WTC11 (cell line): ENCODE measurements at regions of chr7 and their contacts with region 1.

Region 1: DNA sequence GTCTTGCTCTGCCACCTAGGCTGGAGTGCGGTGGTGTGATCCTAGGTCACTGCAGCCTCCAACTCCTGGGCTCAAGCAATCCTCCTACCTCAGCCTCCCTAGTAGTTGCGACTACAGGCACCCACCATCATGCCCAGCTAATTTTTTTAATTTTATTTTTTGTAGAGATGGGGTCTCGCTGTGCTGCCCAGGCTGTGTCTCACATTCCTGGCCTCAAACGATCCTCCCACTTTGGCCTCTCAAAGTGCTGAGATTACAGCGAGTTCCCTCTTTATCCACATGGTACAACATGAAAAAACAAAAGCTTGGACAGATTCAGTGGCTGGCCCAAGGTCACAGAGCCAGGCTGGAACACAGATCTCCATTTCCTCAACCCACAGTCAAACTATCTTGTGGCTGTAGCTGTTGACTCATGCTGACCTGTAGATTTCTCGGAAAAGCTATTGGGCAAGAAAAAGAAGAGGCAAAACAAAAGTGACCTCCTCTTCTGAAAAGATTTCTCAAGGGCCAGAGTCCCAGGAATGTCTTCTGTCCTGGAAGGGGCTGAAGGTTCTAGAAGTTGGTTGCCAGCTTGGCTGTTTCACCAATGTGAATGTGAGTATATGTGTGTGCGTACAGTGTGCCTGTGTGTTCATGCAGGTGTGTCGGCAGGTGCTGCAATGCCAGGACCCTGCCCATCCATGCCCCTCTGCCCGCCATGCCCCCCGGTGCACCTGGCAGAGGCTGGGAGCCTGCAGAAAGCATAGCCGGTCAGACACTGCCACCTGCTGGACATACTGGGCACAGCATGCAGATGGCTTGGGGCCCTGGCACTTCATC is 28.4 kb downstream of the TMEM130 start:
- DNase-seq: peak; percentile 87
- ATAC-seq: peak; percentile 63
- H3K4me3 Mint-ChIP-seq: no peak overlapping the region
- H3K27ac Mint-ChIP-seq: no peak overlapping the region
- H3K4me1 Mint-ChIP-seq: peaks cover 8% of the 10 kb centered on the region
- H3K27me3 Mint-ChIP-seq: no peaks in the 10 kb centered on the region
- CTCF ChIP-seq: peak; percentile 99

Region 2: GRCh38 chr7:98400542-98401340 is 440.6 kb before region 1 on chr7 and contains the start of gene BAIAP2L1:
- CTCF ChIA-PET with region 1: interaction called, 11 read pairs
- POLR2A ChIA-PET with region 1: no interaction called
- DNase-seq: peak; percentile 98
- ATAC-seq: peak; percentile 91
- H3K4me3 Mint-ChIP-seq: peak within 1 kb of the TSS; percentile 84
- H3K27ac Mint-ChIP-seq: peak within 1 kb of the TSS; percentile 97
- H3K4me1 Mint-ChIP-seq: peaks cover 36% of the 10 kb centered on the region
- H3K27me3 Mint-ChIP-seq: no peaks in the 10 kb centered on the region; the same call in 1 of the 2 replicates
- CTCF ChIP-seq: peak; percentile 57; the same call in 1 of the 2 replicates
- total RNA-seq, gene BAIAP2L1: 35.5 to 37.5 TPM (median 36.8 TPM) in 3 replicates

Region 3: DNA sequence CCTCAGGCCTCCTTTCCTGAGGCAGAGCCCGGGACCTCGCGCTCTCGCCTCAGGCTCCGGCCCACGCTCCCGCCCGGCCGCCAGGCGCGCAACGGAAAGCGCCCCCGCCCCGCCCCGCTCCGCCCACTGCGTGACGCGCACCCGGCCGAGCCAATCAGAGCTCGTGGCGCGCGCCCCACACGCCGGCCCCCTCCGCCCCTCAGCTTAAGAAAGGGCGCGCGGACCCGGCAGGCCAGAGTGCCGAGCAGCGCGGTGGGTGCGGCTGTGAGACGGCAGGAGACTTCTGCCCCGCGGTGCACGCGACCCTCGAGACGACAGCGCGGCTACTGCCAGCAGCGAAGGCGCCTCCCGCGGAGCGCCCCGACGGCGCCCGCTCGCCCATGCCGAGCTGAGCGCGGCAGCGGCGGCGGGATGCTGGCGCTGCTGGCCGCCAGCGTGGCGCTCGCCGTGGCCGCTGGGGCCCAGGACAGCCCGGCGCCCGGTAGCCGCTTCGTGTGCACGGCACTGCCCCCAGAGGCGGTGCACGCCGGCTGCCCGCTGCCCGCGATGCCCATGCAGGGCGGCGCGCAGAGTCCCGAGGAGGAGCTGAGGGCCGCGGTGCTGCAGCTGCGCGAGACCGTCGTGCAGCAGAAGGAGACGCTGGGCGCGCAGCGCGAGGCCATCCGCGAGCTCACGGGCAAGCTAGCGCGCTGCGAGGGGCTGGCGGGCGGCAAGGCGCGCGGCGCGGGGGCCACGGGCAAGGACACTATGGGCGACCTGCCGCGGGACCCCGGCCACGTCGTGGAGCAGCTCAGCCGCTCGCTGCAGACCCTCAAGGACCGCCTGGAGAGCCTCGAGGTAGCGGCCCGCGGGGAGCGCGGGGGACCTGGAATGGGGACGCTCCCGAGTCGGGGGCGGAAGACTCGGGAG is 224.1 kb before region 1 on chr7 and contains the start of gene NPTX2:
- CTCF ChIA-PET with region 1: interaction called, 13 read pairs
- POLR2A ChIA-PET with region 1: interaction called, 3 read pairs
- DNase-seq: peak; percentile 83
- ATAC-seq: peak; percentile 82
- H3K4me3 Mint-ChIP-seq: peak within 1 kb of the TSS; percentile 80
- H3K27ac Mint-ChIP-seq: no peak within 1 kb of the TSS
- H3K4me1 Mint-ChIP-seq: peaks cover 18% of the 10 kb centered on the region
- H3K27me3 Mint-ChIP-seq: peaks cover 75% of the 10 kb centered on the region
- CTCF ChIP-seq: no peak
- total RNA-seq, gene NPTX2: 10.9 to 17.0 TPM (median 15.9 TPM) in 3 replicates

Region 4: DNA sequence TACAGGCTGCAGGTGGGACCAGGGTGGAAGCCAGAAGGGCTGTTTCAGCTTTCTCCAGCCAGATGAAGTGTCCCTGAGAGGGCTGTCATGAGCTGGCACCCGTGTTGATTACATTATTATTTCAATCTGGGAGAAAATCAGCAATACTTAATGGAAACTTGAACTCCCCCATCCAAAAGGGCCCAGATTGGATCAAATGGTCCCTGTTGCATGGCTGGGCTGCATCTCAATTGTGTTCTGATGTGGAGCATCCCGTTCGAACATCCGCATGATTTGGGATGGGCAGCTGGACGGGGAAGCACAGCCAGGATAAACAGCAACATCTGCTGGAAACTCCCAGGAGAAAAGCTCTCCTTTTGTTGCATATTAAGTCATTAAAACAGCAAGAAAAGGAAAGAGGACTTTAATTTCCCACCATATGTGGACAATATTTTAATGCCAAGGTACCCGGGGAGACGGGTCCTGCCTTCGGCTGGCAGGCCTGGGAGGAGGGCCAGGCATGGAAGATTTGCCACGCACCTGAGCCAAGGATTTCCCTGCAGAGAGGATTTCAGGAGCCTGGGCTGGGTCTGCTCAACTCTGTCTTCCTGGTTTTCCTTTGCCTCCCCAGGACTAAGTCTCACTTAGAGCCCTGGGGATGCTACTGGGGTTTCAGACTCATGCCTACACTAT is 171.9 kb before region 1 on chr7:
- CTCF ChIA-PET with region 1: no interaction called
- POLR2A ChIA-PET with region 1: no interaction called
- DNase-seq: no peak
- ATAC-seq: no peak
- H3K4me3 Mint-ChIP-seq: no peak overlapping the region
- H3K27ac Mint-ChIP-seq: no peak overlapping the region
- H3K4me1 Mint-ChIP-seq: peaks cover 2% of the 10 kb centered on the region; the same call in 1 of the 2 replicates
- H3K27me3 Mint-ChIP-seq: peaks cover 74% of the 10 kb centered on the region
- CTCF ChIP-seq: no peak

Region 5: GRCh38 chr7:98753989-98754479 is 87.4 kb before region 1 on chr7:
- CTCF ChIA-PET with region 1: interaction called, 25 read pairs
- POLR2A ChIA-PET with region 1: no interaction called
- DNase-seq: peak; percentile 36
- ATAC-seq: peak; percentile 83
- H3K4me3 Mint-ChIP-seq: no peak overlapping the region
- H3K27ac Mint-ChIP-seq: no peak overlapping the region
- H3K4me1 Mint-ChIP-seq: peaks cover 3% of the 10 kb centered on the region; the same call in 1 of the 2 replicates
- H3K27me3 Mint-ChIP-seq: no peaks in the 10 kb centered on the region
- CTCF ChIP-seq: no peak

Region 6: DNA sequence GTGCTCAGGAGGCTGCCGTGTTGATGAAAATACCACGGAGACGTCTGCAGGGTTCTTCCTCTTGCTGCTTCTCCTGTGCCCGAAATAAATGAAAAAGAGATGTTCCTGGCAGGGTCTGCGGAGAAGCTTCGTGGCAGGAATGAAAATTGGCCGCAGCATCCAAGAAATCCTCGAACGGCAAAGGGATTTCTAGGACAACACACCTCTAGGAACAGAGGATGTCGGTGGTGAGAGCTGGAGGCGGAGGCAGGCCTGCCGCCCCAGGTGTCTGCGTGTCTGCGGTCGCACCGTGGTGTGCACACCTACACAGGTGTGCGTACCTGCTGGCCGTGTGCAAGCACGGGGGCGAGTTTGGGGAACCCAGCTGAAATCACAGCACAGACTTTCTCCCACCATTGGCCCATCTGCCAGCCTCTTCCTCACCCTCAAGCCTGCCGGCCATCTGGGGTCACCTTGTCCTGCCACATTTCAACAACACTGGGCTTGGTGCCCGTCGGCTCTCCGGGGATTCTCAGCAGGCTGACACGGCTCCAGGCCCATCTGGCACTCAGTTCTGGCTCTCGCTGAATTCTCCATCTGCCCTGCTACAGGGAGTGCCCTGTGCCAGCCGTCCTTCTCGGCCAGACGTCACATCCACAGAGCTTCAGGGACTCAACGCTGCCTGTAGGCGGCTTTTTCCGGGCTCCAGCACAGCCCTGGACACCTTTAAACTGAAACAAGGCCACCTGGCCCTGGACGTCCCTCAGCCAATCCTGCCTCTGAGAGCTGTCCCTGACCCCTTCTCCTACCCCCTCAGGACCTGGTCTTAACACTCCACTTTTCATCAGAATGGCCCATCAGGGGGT is 14.8 kb before region 1 on chr7:
- CTCF ChIA-PET with region 1: interaction called, 23 read pairs
- POLR2A ChIA-PET with region 1: no interaction called
- DNase-seq: peak; percentile 20
- ATAC-seq: peak; percentile 60
- H3K4me3 Mint-ChIP-seq: no peak overlapping the region; the same call in 1 of the 2 replicates
- H3K27ac Mint-ChIP-seq: no peak overlapping the region
- H3K4me1 Mint-ChIP-seq: peaks cover 19% of the 10 kb centered on the region
- H3K27me3 Mint-ChIP-seq: no peaks in the 10 kb centered on the region; the same call in 1 of the 2 replicates
- CTCF ChIP-seq: no peak

Region 7: DNA sequence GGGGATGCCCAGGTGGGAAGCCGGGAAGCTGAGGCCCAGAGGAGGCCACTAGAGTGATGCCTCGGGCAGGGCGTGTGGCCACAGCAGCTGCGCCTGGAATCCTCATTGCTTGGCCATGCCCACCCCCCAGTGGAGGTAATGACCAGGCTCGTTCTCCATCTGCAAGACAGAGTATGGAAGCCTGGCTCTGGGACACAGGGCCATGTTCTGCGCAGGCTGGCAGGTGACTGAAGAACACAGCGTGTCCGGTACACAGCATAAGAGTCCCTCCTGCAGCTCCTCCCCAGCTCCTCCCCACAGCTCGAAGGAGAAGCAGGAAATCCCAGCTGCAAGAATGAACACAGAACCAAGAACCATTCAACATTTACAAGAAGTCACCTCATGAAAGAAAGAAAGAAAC is 237.7 kb after region 1 on chr7:
- CTCF ChIA-PET with region 1: no interaction called
- POLR2A ChIA-PET with region 1: no interaction called
- DNase-seq: no peak
- ATAC-seq: peak; percentile 50
- H3K4me3 Mint-ChIP-seq: no peak overlapping the region
- H3K27ac Mint-ChIP-seq: 0 out of 2 replicates have a peak overlapping the region, but pooled peaks have one; percentile 24
- H3K4me1 Mint-ChIP-seq: peaks cover 23% of the 10 kb centered on the region
- H3K27me3 Mint-ChIP-seq: no peaks in the 10 kb centered on the region
- CTCF ChIP-seq: no peak